GM12878 (cell line): ENCODE measurements at regions of chr13 and their contacts with region 1.

Region 1: GRCh38 chr13:33761740-33762139 is 56.2 kb upstream of the RFC3 start:
- DNase-seq: no peak
- ATAC-seq: no peak
- H3K4me3 ChIP-seq: no peak overlapping the region
- H3K27ac ChIP-seq: no peak overlapping the region
- H3K4me1 ChIP-seq: peaks cover 15% of the 10 kb centered on the region
- H3K27me3 ChIP-seq: no peaks in the 10 kb centered on the region
- CTCF ChIP-seq: no peak
- EP300 ChIP-seq: no peak
- POLR2A ChIP-seq: no peak
- RAD21 ChIP-seq: no peak

Region 2: DNA sequence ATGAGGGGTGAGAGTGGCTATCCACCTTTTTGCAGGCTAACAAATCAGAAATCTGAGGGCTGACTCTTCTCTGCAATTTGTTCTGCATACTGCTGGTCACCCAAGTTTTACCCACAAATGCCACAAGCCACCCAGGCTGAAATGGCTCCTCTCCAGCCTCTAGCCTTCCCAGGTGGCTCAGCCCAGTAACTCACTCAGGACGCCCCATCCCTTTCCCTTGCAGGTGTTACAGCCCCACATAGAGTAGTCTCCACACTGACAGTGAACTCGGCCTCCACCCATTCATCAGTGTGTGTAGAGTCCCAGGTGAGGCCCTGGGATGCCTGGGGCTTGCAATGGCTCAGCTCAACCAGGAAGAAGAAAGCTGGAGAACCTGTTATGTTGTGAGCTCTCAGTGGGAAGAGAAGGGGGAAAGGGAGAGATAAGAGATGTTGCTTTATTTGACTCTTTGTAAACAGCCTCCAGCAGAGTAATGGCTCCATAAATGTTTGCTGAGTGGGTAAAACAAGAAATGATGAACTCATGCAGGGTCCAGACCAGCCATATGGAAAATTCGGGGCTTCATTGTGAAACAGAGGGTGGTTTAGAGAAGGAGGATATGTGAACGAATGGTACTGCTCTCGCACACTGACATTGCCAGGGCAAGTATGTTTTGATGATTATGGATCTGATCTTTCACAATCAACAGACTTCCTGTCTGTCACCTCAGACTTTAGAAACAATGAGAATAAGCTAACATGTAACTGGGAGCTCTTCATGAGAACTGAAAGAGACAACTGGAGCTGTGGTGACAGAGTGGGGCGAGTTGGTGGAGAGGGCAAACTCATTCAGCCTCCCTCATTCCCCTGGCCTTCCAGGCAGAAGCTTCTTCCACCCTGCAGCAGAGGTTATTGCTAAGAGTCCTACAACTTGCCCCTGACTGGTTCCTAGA is 18.0 kb before region 1 on chr13:
- CTCF ChIA-PET with region 1: interaction called, 4 read pairs
- POLR2A ChIA-PET with region 1: interaction called, 5 read pairs
- RAD21 ChIA-PET with region 1: no interaction called
- SMC1A ChIA-PET with region 1: interaction called, 11 read pairs
- in situ Hi-C with region 1: no loop called
- intact Hi-C with region 1: no loop called
- DNase-seq: peak; percentile 80
- ATAC-seq: peak; percentile 77
- H3K4me3 ChIP-seq: peak overlapping the region; percentile 21; the same call in 1 of the 2 replicates
- H3K27ac ChIP-seq: peak overlapping the region; percentile 86
- H3K4me1 ChIP-seq: peaks cover 35% of the 10 kb centered on the region
- H3K27me3 ChIP-seq: no peaks in the 10 kb centered on the region
- CTCF ChIP-seq: no peak
- EP300 ChIP-seq: peak in 1 of 2 experiments; percentile 15; a peak in 1 of 4 replicates
- POLR2A ChIP-seq: no peak
- RAD21 ChIP-seq: no peak